Posterior cingulate gyrus (tissue), 11 donors: ENCODE measurements at regions of chr2 and their contacts with region 1.

Region 1: DNA sequence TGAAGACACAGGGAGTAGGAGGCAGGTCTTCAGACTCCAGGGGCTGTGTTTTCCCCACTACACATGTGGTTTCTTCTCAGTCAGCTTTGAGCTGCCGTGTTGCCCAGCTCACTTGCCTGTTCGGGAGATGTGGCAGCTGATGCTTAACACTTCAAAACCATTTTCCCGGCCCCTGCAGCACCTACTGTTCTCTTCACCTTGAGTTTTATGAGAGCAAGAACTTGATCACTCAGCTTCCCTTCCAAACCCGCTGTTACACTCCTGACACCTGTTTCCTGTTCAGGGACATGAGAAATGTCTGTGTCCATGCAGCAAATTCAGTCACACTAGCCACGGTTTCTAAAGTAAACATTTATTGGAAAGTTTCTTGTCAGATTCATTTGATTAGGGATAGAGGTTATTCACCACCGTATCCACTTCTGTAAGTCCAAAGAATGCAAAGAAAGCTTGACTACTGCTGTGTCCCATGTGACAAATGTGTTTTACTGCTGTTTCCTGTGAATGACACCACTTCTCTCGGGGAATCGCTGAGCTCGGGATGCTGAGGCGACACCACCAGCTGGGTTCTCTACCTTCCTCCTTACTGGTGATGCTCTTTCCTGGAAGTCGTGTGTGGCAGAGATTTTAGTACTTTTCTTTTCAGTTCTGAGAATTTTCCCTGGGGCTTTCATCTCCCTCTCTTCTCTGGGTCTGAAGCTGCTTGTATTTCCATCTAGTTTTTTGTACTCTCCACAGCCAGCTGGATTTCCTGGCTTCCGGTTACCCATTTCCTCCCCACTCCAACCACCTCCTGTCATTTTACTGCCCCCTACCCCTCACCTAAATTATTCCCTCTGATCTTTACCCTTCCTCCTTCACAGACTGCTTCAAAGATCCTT is 91.7 kb downstream of the KLF7 start:
- DNase-seq: peak in 6 of 10 donors; percentile 16 to 83 (median 56)

Region 2: GRCh38 chr2:206189691-206190090 is 884.3 kb before region 1 on chr2:
- intact Hi-C with region 1: no loop called
- DNase-seq: no peak

Region 3: DNA sequence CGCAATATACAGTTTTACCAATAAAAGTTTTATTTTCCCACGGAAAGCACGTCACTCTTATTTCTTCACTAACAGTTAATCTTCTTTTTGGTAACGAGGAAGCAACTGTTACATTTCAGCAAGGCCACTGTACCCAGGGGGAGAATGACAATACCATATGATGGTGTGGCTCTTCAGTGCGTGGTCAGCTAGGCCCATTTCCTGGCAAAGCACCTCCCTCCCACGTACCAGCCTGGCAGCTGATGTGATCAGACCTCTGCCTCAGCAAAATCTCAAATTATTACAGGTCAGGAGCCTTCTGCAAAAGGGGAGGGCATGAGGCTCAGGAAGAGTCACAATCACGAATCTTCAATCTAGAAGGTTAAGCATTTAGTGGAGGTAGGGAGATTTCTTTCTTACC is 36.3 kb after region 1 on chr2:
- intact Hi-C with region 1: loop called (anchors 2 kb)
- DNase-seq: no peak